MCF 10A (cell line): ENCODE measurements at regions of chr1 and their contacts with region 1.

Region 1: GRCh38 chr1:85307987-85308832 is 31.8 kb upstream of the BCL10 start:
- DNase-seq: peak; percentile 90
- H3K4me3 Mint-ChIP-seq: no peak overlapping the region
- H3K27ac Mint-ChIP-seq: no peak overlapping the region
- H3K4me1 Mint-ChIP-seq: peaks cover 1% of the 10 kb centered on the region
- H3K27me3 Mint-ChIP-seq: no peaks in the 10 kb centered on the region
- CTCF ChIP-seq: peak; percentile 94

Region 2: GRCh38 chr1:85297855-85298629 is 10.2 kb before region 1 on chr1:
- CTCF ChIA-PET with region 1: interaction called, 19 read pairs
- POLR2A ChIA-PET with region 1: no interaction called
- intact Hi-C with region 1: no loop called
- DNase-seq: peak; percentile 96
- H3K4me3 Mint-ChIP-seq: peak overlapping the region; percentile 52
- H3K27ac Mint-ChIP-seq: peak overlapping the region; percentile 40
- H3K4me1 Mint-ChIP-seq: peaks cover 23% of the 10 kb centered on the region
- H3K27me3 Mint-ChIP-seq: no peaks in the 10 kb centered on the region
- CTCF ChIP-seq: no peak

Region 3: DNA sequence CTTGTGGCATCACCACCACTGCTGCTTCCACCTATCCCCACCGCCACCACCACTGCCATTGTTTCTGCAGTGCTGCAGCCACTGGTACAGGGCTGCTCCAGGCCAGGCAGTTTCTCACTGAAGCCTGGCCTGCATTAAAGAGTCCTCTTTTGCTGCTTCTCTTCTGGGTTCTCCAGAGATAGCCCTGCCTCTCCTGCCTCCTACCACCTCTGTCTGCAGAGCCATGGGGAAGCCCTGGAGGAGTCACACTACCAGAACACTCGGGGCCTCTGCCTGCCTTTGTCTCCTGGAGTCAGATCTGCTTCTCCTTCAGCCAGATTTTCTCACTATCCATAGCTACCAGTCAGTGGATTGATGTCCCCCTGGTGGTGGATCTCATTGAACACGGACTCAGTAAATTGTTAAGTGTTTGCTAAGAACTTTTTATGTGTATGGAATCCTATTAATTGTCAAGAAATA is 194.4 kb after region 1 on chr1:
- CTCF ChIA-PET with region 1: no interaction called
- POLR2A ChIA-PET with region 1: interaction called, 3 read pairs
- intact Hi-C with region 1: loop called (anchors 2 kb)
- DNase-seq: peak; percentile 79
- H3K4me3 Mint-ChIP-seq: no peak overlapping the region
- H3K27ac Mint-ChIP-seq: no peak overlapping the region
- H3K4me1 Mint-ChIP-seq: peaks cover 10% of the 10 kb centered on the region
- H3K27me3 Mint-ChIP-seq: no peaks in the 10 kb centered on the region
- CTCF ChIP-seq: peak; percentile 43

Region 4: DNA sequence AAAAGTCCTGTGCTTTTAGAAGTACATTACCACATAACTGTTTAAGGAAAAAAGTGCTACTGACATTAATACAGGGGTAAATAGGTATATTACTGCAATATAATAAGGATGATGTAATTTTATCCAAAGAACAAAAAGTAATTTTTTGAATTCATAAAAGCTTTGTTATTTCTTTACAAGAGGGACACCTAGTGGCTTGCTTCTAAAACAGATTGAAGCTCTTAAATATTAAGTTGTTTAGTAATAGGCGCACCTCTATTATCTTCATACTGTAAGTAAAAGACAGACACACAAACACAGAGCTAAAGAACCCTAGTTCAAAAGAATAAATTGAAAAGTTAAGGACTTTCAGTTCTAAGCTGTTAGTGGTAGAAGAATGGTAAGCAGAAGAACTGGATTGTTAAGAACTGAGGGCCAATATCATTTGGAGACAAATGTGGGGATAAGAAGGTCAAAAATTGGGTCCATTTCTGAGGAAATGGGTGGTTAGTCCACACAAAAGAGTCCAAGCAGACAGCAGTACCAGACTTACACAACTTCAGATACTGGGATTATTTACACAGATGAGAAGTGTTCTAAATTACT is 384.6 kb after region 1 on chr1:
- CTCF ChIA-PET with region 1: interaction called, 27 read pairs
- POLR2A ChIA-PET with region 1: interaction called, 4 read pairs
- intact Hi-C with region 1: loop called (anchors 1 kb)
- DNase-seq: peak; percentile 52
- H3K4me3 Mint-ChIP-seq: no peak overlapping the region
- H3K27ac Mint-ChIP-seq: peak overlapping the region; percentile 65
- H3K4me1 Mint-ChIP-seq: peaks cover 10% of the 10 kb centered on the region
- H3K27me3 Mint-ChIP-seq: no peaks in the 10 kb centered on the region
- CTCF ChIP-seq: peak; percentile 60

Region 5: GRCh38 chr1:85884372-85885035 is 576.3 kb after region 1 on chr1:
- CTCF ChIA-PET with region 1: interaction called, 4 read pairs
- POLR2A ChIA-PET with region 1: no interaction called
- intact Hi-C with region 1: loop called (anchors 5 kb)
- DNase-seq: peak; percentile 42
- H3K4me3 Mint-ChIP-seq: no peak overlapping the region
- H3K27ac Mint-ChIP-seq: no peak overlapping the region
- H3K4me1 Mint-ChIP-seq: no peaks in the 10 kb centered on the region
- H3K27me3 Mint-ChIP-seq: peaks cover 13% of the 10 kb centered on the region
- CTCF ChIP-seq: peak; percentile 52